IMR-90 (cell line): ENCODE measurements at regions of chr6 and their contacts with region 1.

Region 1: DNA sequence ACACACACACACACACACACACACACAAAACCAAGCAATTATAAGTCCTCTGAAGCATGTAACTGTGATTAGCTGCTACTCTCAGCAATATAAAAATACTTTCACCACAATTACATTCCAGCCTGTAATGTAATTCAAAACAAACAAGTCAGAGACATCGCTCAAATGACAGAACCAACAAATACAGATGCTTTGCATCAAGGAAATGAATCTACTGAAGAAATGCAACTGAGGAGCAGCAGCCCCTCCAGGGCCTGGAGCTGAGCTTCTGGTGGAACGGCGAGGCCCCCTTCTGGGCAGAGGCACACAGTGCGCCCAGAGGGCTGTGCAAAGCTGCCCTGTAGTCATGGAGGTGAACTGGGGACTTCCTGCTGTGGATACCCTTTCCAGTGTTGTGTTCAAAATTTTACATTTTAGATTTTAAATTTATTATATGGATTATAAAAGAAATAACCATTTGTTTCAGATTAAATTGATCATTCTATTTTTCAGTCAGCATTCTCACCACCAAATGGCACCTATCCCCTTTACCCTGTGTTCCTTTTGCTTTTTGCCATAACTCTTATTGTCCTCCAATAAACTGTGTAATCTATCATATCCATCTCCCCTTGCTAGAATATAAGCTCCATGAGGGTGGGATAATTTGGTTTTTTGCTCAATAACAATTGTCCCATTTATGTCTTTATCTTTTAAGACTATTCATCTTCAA is 23.2 kb downstream of the ADAT2 start:
- DNase-seq: peak; percentile 86
- ATAC-seq: peak; percentile 100
- H3K4me3 ChIP-seq: no peak overlapping the region
- H3K27ac ChIP-seq: no peak overlapping the region
- H3K4me1 ChIP-seq: peaks cover 2% of the 10 kb centered on the region
- H3K27me3 ChIP-seq: no peaks in the 10 kb centered on the region
- CTCF ChIP-seq: peak; percentile 97
- POLR2A ChIP-seq: peak; percentile 51; the same call in 1 of the 2 replicates
- RAD21 ChIP-seq: peak; percentile 99

Region 2: DNA sequence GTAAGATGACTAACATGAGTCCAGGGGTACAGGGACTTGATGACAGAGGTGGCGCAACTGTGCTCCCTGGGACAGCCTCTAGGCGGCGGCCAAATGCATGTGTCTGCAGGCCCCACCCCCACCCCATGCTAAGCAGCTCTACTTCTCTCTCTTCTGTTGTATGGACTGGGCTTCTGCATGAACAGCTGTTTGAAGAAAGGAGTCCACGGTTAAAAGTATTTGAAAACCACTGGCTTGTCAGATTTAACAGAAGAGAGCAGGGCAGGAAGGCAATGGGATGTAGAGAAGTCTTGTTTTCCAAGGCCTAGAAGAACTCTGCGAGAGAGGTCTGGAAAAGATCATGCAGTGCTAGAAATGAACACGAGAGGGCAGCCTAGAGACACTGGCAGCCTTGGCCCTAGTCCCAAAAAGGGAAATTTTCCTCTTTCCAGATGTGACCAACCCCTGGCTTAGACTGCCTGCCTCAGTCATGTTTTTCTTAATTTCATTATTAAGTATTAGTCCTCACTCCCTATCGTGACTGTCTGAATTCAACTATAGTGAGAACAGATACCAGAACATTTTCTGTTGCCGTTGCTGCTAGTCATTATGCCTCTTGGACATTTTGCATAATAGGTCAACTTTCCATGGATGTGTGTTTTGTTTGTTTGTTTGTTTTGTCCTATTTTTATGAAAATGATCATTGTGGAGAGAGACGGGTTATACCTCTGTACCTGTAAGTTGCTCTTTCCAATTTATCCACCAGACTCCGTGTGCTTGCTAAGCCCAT is 860.5 kb before region 1 on chr6:
- CTCF ChIA-PET with region 1: interaction called, 6 read pairs
- POLR2A ChIA-PET with region 1: no interaction called
- dilution Hi-C with region 1: no loop called
- in situ Hi-C with region 1: no loop called
- intact Hi-C with region 1: loop called (anchors 1 kb)
- DNase-seq: peak; percentile 47
- ATAC-seq: peak; percentile 79
- H3K4me3 ChIP-seq: no peak overlapping the region
- H3K27ac ChIP-seq: no peak overlapping the region
- H3K4me1 ChIP-seq: peaks cover 4% of the 10 kb centered on the region; the same call in 1 of the 2 replicates
- H3K27me3 ChIP-seq: peaks cover 7% of the 10 kb centered on the region
- CTCF ChIP-seq: peak; percentile 77
- POLR2A ChIP-seq: no peak
- RAD21 ChIP-seq: peak; percentile 67

Region 3: GRCh38 chr6:142885182-142885867 is 541.9 kb before region 1 on chr6:
- CTCF ChIA-PET with region 1: no interaction called
- POLR2A ChIA-PET with region 1: no interaction called
- dilution Hi-C with region 1: no loop called
- in situ Hi-C with region 1: no loop called
- intact Hi-C with region 1: loop called (anchors 5 kb)
- DNase-seq: peak; percentile 99
- ATAC-seq: peak; percentile 86
- H3K4me3 ChIP-seq: peak overlapping the region; percentile 39
- H3K27ac ChIP-seq: peak overlapping the region; percentile 78
- H3K4me1 ChIP-seq: peaks cover 9% of the 10 kb centered on the region
- H3K27me3 ChIP-seq: no peaks in the 10 kb centered on the region
- CTCF ChIP-seq: no peak
- POLR2A ChIP-seq: peak; percentile 41; the same call in 1 of the 2 replicates
- RAD21 ChIP-seq: peak; percentile 25; the same call in 1 of the 2 replicates

Region 4: DNA sequence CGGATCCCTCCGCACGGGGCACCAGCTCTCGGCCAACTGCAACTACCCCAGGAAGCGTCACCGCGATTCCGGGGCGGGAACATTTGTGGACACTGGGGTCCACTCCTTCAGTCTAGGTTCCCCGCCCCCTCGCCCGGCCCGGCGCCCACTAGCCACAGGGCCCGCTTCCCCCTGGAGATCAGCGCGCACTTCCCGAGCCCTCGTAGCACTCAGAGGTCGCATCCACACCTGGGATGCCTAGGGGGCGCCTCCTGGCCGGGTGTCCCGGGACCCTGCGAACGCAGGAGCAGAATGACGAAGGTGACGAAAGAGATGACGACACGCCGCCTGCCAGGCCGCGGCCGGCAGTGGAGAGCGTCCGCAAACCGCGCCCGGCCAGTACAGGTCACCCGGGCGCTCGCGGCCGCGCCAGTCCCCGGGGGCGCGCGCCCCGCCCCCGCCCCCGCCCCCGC is 366.9 kb before region 1 on chr6:
- CTCF ChIA-PET with region 1: no interaction called
- POLR2A ChIA-PET with region 1: no interaction called
- dilution Hi-C with region 1: no loop called
- in situ Hi-C with region 1: no loop called
- intact Hi-C with region 1: loop called (anchors 5 kb)
- DNase-seq: peak; percentile 81
- ATAC-seq: peak; percentile 90
- H3K4me3 ChIP-seq: peak overlapping the region; percentile 97
- H3K27ac ChIP-seq: peak overlapping the region; percentile 86
- H3K4me1 ChIP-seq: peaks cover 7% of the 10 kb centered on the region
- H3K27me3 ChIP-seq: no peaks in the 10 kb centered on the region
- CTCF ChIP-seq: no peak
- POLR2A ChIP-seq: peak; percentile 42; the same call in 1 of the 2 replicates
- RAD21 ChIP-seq: no peak

Region 5: GRCh38 chr6:143232849-143233248 is 194.4 kb before region 1 on chr6:
- CTCF ChIA-PET with region 1: interaction called, 13 read pairs
- POLR2A ChIA-PET with region 1: no interaction called
- dilution Hi-C with region 1: no loop called
- in situ Hi-C with region 1: no loop called
- intact Hi-C with region 1: loop called (anchors 1 kb)
- DNase-seq: peak; percentile 23
- ATAC-seq: no peak
- H3K4me3 ChIP-seq: no peak overlapping the region
- H3K27ac ChIP-seq: no peak overlapping the region
- H3K4me1 ChIP-seq: no peaks in the 10 kb centered on the region
- H3K27me3 ChIP-seq: no peaks in the 10 kb centered on the region
- CTCF ChIP-seq: peak; percentile 49
- POLR2A ChIP-seq: no peak
- RAD21 ChIP-seq: peak; percentile 44

Region 6: GRCh38 chr6:143253586-143253985 is 173.7 kb before region 1 on chr6:
- CTCF ChIA-PET with region 1: no interaction called
- POLR2A ChIA-PET with region 1: no interaction called
- dilution Hi-C with region 1: no loop called
- in situ Hi-C with region 1: no loop called
- intact Hi-C with region 1: loop called (anchors 5 kb)
- DNase-seq: peak; percentile 41
- ATAC-seq: peak; percentile 85
- H3K4me3 ChIP-seq: no peak overlapping the region
- H3K27ac ChIP-seq: peak overlapping the region; percentile 65; the same call in 1 of the 2 replicates
- H3K4me1 ChIP-seq: peaks cover 6% of the 10 kb centered on the region; the same call in 1 of the 2 replicates
- H3K27me3 ChIP-seq: no peaks in the 10 kb centered on the region
- CTCF ChIP-seq: no peak
- POLR2A ChIP-seq: no peak
- RAD21 ChIP-seq: no peak

Region 7: GRCh38 chr6:143286251-143286795 is 140.9 kb before region 1 on chr6:
- CTCF ChIA-PET with region 1: no interaction called
- POLR2A ChIA-PET with region 1: no interaction called
- dilution Hi-C with region 1: no loop called
- in situ Hi-C with region 1: no loop called
- intact Hi-C with region 1: no loop called
- DNase-seq: peak; percentile 37
- ATAC-seq: peak; percentile 87
- H3K4me3 ChIP-seq: no peak overlapping the region
- H3K27ac ChIP-seq: peak overlapping the region; percentile 27; the same call in 1 of the 2 replicates
- H3K4me1 ChIP-seq: peaks cover 3% of the 10 kb centered on the region
- H3K27me3 ChIP-seq: no peaks in the 10 kb centered on the region
- CTCF ChIP-seq: no peak
- POLR2A ChIP-seq: no peak
- RAD21 ChIP-seq: no peak